ENCODE measurements at regions of chr19 and their contacts with region 1.

Region 1: DNA sequence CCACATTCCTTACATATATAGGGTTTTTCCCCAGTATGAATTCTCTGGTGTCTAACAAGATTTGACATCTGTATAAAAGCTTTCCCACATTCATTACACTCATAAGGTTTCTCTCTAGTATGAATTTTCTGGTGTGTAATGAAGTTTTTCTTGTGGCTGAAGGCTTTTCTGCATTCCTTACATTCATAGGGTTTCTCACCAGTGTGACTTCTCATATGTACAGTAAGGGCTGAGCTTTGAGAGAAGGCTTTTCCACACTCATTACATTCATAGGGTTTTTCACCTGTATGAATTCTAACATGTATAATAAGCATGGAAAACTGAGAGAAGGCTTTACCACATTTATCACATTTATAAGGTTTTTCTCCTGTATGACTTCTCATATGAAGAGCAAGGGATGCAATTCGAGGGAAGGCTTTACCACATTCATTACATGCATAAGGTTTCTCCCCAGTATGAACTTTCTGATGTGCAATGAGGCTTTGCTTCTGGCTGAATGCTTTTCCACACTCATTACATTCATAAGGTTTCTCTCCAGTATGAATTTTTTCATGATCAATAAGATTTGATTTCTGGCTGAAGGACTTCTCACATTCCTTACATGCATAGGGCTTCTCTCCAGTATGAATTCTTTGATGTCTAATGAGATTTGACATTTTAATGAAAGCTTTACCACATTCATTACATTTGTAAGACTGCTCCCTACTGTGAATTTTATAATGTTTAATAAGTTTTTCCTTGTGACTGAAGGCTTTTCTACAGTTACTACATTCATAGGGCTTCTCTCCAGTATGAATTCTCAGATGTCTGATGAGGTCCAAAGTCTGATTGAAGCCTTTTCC is 42.6 kb downstream of the ZNF527 start:
- DNase-seq: no peak
- ATAC-seq: no peak
- H3K4me3 ChIP-seq: no peak overlapping the region
- H3K27ac ChIP-seq: no peak overlapping the region
- H3K4me1 ChIP-seq: no peaks in the 10 kb centered on the region
- H3K27me3 ChIP-seq: no peaks in the 10 kb centered on the region
- CTCF ChIP-seq: no peak

Region 2: DNA sequence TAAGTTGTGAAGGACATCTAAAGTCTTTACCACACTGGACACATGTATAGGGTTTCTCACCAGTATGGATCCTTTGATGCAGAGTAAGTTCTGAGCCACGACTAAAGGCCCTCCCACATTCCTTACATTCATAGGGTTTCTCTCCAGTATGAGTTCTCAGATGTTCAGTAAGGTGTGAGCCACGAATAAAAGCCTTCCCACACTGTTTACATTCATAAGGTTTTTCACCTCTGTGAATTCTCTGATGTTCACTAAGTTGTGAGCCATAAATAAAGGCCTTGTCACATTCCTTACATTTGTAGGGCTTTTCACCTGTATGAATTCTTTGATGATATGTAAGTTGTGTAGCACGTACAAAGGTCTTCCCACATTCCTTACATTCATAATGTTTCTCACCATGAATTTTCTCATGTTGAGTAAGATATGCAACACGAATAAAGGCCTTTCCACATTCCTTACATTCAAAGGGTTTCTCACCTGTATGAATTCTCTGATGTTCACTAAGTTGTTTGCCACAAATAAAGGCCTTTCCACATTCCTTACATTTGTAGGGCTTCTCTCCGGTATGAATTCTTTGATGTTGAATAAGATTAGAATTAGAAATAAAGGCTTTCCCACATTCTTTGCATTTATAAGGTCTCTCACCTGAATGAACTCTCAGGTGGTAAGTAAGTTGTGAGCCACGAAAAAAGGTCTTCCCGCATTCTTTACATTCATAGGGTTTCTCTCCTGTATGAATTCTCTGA is 151.3 kb after region 1 on chr19:
- intact Hi-C with region 1: loop called in 1 of 10 experiments (anchors 10 kb)
- DNase-seq: no peak
- ATAC-seq: no peak
- H3K4me3 ChIP-seq: no peak overlapping the region
- H3K27ac ChIP-seq: no peak overlapping the region
- H3K4me1 ChIP-seq: no peaks in the 10 kb centered on the region
- H3K27me3 ChIP-seq: no peaks in the 10 kb centered on the region
- CTCF ChIP-seq: no peak